Naive thymus-derived CD4-positive, alpha-beta T cell (primary cell): ENCODE measurements at regions of chr17 and their contacts with region 1.

Region 1: GRCh38 chr17:39754161-39754951 is 16.6 kb downstream of the GRB7 start:
- DNase-seq: peak; percentile 94 to 99 (median 99)
- ATAC-seq: peak; percentile 90
- H3K4me3 ChIP-seq: peak overlapping the region; percentile 76
- H3K4me3 Mint-ChIP-seq: peak overlapping the region; percentile 63 to 92 (median 82)
- H3K27ac ChIP-seq: peak overlapping the region; percentile 87
- H3K27ac Mint-ChIP-seq: peak overlapping the region; percentile 87 to 99 (median 97)
- H3K4me1 ChIP-seq: peaks cover 43 to 59% of the 10 kb centered on the region in 2 donors
- H3K4me1 Mint-ChIP-seq: peaks cover 37 to 59% (median 53%) of the 10 kb centered on the region in 7 donors
- H3K27me3 ChIP-seq: no peaks in the 10 kb centered on the region
- H3K27me3 Mint-ChIP-seq: no peaks in the 10 kb centered on the region

Region 2: DNA sequence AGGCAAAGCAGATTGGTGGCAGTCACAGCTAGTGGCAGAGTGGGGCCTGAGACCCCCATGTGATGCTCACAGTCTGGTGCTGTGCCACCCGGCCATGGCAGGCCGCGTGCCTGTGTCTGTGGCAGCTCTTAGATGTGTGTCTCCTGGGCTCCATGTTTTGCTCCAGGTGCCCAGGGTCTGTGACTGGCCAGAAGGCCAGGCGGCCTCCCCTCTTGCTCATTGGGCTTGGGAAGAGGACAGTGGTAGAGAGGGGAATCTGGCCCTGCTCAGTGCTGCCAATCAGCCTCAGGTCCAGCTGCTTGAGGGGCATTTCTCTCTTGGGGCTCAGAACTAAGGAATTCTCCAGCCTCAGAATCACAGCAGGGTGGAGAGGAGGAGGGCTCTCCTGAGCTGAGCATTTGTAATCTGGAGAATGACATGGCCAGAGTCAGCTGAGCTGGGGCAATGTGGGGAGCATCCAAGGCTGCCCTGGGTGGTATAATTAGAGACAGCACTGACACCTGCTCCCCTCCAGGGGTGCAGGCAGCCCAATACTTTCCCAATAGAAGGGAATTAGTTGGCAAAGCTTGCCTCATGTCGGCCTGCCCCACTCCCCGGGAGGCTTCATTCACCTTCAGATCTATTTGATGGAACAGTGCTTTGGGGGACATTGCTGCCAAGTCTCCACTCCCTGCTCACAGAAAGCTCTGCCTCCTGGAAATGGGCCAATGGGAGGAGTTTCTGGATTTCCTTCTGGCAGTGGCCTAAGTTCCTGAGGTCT is 831.6 kb before region 1 on chr17:
- CTCF ChIA-PET with region 1: no interaction called
- POLR2A ChIA-PET with region 1: no interaction called
- intact Hi-C with region 1: no loop called
- DNase-seq: peak in 1 of 9 donors; percentile 17
- ATAC-seq: no peak
- H3K4me3 ChIP-seq: no peak overlapping the region
- H3K4me3 Mint-ChIP-seq: no peak overlapping the region
- H3K27ac ChIP-seq: no peak overlapping the region
- H3K27ac Mint-ChIP-seq: peak overlapping the region in 4 of 9 donors; percentile 38 to 93 (median 45)
- H3K4me1 ChIP-seq: peaks cover 12 to 14% of the 10 kb centered on the region in 2 donors
- H3K4me1 Mint-ChIP-seq: peaks cover 29 to 45% (median 31%) of the 10 kb centered on the region in 7 donors
- H3K27me3 ChIP-seq: no peaks in the 10 kb centered on the region
- H3K27me3 Mint-ChIP-seq: no peaks in the 10 kb centered on the region

Region 3: GRCh38 chr17:39621523-39622379 is 132.6 kb before region 1 on chr17:
- CTCF ChIA-PET with region 1: interaction called, 27 read pairs
- POLR2A ChIA-PET with region 1: interaction called, 6 read pairs
- intact Hi-C with region 1: loop called (anchors 1 kb)
- DNase-seq: peak; percentile 74 to 95 (median 86)
- ATAC-seq: peak; percentile 94
- H3K4me3 ChIP-seq: peak overlapping the region; percentile 41
- H3K4me3 Mint-ChIP-seq: peak overlapping the region in 8 of 10 donors; percentile 34 to 82 (median 58)
- H3K27ac ChIP-seq: no peak overlapping the region
- H3K27ac Mint-ChIP-seq: peak overlapping the region in 4 of 9 donors; percentile 10 to 74 (median 66)
- H3K4me1 ChIP-seq: peaks cover 12 to 26% of the 10 kb centered on the region in 2 donors
- H3K4me1 Mint-ChIP-seq: peaks cover 15 to 38% (median 24%) of the 10 kb centered on the region in 7 donors
- H3K27me3 ChIP-seq: peaks cover 3 to 7% of the 10 kb centered on the region in 2 donors
- H3K27me3 Mint-ChIP-seq: peaks cover 5 to 69% (median 18%) of the 10 kb centered on the region in 5 donors

Region 4: DNA sequence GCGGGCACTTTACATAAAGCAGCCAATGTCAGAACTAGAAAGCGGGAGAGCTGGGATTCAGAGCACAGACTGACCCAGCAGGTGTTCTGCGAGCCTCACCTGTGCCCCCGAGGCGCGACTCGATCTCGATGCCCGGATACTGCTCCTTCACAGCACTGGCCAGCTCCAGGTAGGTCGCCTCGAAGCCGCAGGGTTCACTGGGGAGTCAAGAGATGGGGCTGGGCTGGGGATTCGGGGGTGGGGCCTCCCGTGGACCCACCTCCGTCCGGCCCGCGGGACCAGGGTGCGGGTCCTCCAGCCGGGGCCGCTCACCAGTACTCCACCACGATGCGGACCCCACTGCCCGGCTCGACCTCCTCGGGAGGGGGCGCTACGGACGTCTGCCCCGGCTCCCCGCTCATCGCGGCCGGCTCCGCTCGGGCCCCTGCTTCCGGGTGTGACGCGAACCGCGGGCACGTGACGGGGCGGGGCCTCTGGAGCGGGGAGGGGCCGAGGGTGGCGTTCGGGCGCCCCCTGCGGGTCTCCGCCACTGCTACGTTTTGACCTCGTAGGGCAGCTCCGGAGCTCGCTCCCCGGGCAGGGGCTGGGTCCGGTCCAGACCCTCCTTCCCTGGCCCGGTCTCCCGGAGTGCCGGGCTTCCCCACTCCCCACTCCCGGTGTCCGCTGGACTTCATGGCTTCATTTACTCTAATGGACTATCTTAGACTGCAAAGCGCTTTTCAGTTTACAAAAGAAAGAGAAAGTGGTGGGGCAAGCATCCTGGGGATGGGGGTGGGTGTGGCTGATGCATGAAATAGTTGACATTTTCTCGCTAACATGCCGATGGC is 24.0 kb before region 1 on chr17 and contains the start of gene MIEN1:
- CTCF ChIA-PET with region 1: interaction called, 7 read pairs
- POLR2A ChIA-PET with region 1: interaction called, 8 read pairs
- intact Hi-C with region 1: loop called (anchors 1 kb)
- DNase-seq: peak; percentile 87 to 100 (median 95)
- ATAC-seq: peak; percentile 98
- H3K4me3 ChIP-seq: peak within 1 kb of the TSS; percentile 95
- H3K4me3 Mint-ChIP-seq: peak within 1 kb of the TSS; percentile 88 to 96 (median 92)
- H3K27ac ChIP-seq: peak within 1 kb of the TSS; percentile 95
- H3K27ac Mint-ChIP-seq: peak within 1 kb of the TSS; percentile 84 to 98 (median 94)
- H3K4me1 ChIP-seq: peaks cover 10% of the 10 kb centered on the region in 2 donors
- H3K4me1 Mint-ChIP-seq: peaks cover 11 to 20% (median 16%) of the 10 kb centered on the region in 7 donors
- H3K27me3 ChIP-seq: no peaks in the 10 kb centered on the region
- H3K27me3 Mint-ChIP-seq: peaks cover 0 to 7% (median 0%) of the 10 kb centered on the region in 5 donors
- total RNA-seq, gene MIEN1: 28.7 to 40.1 (median 32.3) TPM

Region 5: GRCh38 chr17:39800540-39800939 is 46.2 kb after region 1 on chr17:
- CTCF ChIA-PET with region 1: interaction called, 4 read pairs
- POLR2A ChIA-PET with region 1: interaction called, 30 read pairs
- intact Hi-C with region 1: loop called (anchors 1 to 2 kb)
- DNase-seq: peak in 8 of 9 donors; percentile 46 to 81 (median 80)
- ATAC-seq: peak; percentile 99
- H3K4me3 ChIP-seq: peak overlapping the region; percentile 38
- H3K4me3 Mint-ChIP-seq: peak overlapping the region; percentile 22 to 81 (median 61)
- H3K27ac ChIP-seq: peak overlapping the region; percentile 52
- H3K27ac Mint-ChIP-seq: peak overlapping the region; percentile 89 to 97 (median 94)
- H3K4me1 ChIP-seq: peaks cover 27 to 53% of the 10 kb centered on the region in 2 donors
- H3K4me1 Mint-ChIP-seq: peaks cover 35 to 82% (median 69%) of the 10 kb centered on the region in 7 donors
- H3K27me3 ChIP-seq: no peaks in the 10 kb centered on the region
- H3K27me3 Mint-ChIP-seq: no peaks in the 10 kb centered on the region

Region 6: DNA sequence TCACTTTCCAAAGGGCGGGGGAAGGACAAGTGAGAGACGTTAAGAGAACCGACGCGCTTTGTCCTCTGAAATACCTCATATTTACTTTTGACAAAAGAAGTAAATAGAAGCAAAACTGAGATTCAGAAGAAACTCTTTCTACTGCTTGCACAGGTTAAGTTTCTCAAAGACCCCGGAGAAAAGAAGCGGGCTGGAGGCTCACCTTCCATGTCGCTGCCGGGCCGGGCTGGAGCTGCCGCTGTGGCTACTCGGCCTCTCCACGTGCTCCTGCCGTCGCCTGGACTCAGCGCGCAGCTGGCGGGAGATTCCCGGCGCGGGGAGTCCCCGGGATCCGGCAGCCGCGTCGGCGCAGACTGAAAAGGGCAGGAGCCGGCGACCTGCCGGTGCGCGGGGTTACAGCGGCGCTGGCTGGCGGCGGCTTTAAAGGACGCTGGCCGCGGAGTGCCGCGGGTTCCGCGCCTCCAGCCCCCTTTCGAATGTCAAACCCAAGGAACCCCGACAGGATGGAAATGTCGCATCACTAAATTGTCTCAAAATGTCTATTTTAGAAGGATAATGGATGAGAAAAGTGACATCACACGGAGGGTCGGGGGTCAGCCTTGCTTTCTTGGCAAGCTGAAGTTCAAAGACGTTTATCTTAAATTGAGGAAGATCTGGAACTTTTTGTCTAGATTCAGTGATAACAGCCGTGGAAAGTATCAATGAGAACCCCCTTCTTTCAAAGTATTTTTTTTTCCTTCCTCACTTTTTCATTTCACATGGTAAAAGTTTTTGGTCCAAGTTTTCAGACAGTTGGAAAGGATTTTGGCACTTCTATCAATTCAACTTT is 109.8 kb after region 1 on chr17 and contains the start of gene IKZF3:
- CTCF ChIA-PET with region 1: interaction called, 8 read pairs
- POLR2A ChIA-PET with region 1: interaction called, 50 read pairs
- intact Hi-C with region 1: loop called (anchors 1 kb)
- DNase-seq: peak; percentile 69 to 87 (median 76)
- ATAC-seq: peak; percentile 89
- H3K4me3 ChIP-seq: peak within 1 kb of the TSS; percentile 69
- H3K4me3 Mint-ChIP-seq: peak within 1 kb of the TSS; percentile 86 to 98 (median 94)
- H3K27ac ChIP-seq: peak within 1 kb of the TSS; percentile 99
- H3K27ac Mint-ChIP-seq: peak within 1 kb of the TSS; percentile 86 to 98 (median 97)
- H3K4me1 ChIP-seq: peaks cover 27 to 33% of the 10 kb centered on the region in 2 donors
- H3K4me1 Mint-ChIP-seq: peaks cover 22 to 88% (median 68%) of the 10 kb centered on the region in 7 donors
- H3K27me3 ChIP-seq: no peaks in the 10 kb centered on the region
- H3K27me3 Mint-ChIP-seq: no peaks in the 10 kb centered on the region
- total RNA-seq, gene IKZF3: 26.1 to 77.8 (median 61.1) TPM